Natural killer cell (primary cell): ENCODE measurements at regions of chr15 and their contacts with region 1.

Region 1: GRCh38 chr15:43903864-43904290 is 77.1 kb downstream of the WDR76 start:
- DNase-seq: peak; percentile 17 to 73
- ATAC-seq: peak in 1 of 3 donors; percentile 77
- H3K4me3 ChIP-seq: no peak overlapping the region
- H3K4me3 Mint-ChIP-seq: no peak overlapping the region
- H3K27ac ChIP-seq: no peak overlapping the region
- H3K27ac Mint-ChIP-seq: no peak overlapping the region
- H3K4me1 ChIP-seq: no peaks in the 10 kb centered on the region
- H3K4me1 Mint-ChIP-seq: peaks cover 5% of the 10 kb centered on the region in 2 donors
- H3K27me3 ChIP-seq: no peaks in the 10 kb centered on the region
- H3K27me3 Mint-ChIP-seq: peaks cover 0 to 2% of the 10 kb centered on the region in 2 donors
- CTCF ChIP-seq: peak; percentile 62

Region 2: DNA sequence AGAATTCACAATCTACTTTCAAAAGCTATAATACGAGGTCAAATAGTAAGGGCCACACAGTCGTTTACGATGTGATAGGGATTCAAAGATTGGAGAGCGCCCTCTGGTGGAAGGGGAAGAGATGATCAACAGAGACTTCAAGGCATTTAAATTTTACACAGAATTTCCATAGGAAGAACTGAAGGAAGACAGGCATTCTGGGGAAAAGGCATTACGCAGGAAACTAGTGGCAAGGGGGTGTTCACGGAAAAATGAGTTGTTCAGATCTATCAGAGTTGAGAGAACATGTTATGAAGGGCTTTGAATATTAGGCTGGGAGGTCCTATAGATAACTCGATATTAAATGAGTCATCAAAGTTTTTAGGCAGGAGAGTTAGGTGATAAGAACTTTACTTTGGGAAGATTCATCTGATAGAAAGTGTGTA is 162.5 kb after region 1 on chr15:
- intact Hi-C with region 1: loop called (anchors 2 kb)
- DNase-seq: peak in 1 of 2 donors; percentile 76
- ATAC-seq: peak in 1 of 3 donors; percentile 63
- H3K4me3 ChIP-seq: no peak overlapping the region
- H3K4me3 Mint-ChIP-seq: no peak overlapping the region
- H3K27ac ChIP-seq: no peak overlapping the region
- H3K27ac Mint-ChIP-seq: no peak overlapping the region
- H3K4me1 ChIP-seq: no peaks in the 10 kb centered on the region
- H3K4me1 Mint-ChIP-seq: no peaks in the 10 kb centered on the region
- H3K27me3 ChIP-seq: no peaks in the 10 kb centered on the region
- H3K27me3 Mint-ChIP-seq: peaks cover 10 to 35% of the 10 kb centered on the region in 2 donors
- CTCF ChIP-seq: peak; percentile 73